BJ (cell line): ENCODE measurements at regions of chr15 and their contacts with region 1.

Region 1: DNA sequence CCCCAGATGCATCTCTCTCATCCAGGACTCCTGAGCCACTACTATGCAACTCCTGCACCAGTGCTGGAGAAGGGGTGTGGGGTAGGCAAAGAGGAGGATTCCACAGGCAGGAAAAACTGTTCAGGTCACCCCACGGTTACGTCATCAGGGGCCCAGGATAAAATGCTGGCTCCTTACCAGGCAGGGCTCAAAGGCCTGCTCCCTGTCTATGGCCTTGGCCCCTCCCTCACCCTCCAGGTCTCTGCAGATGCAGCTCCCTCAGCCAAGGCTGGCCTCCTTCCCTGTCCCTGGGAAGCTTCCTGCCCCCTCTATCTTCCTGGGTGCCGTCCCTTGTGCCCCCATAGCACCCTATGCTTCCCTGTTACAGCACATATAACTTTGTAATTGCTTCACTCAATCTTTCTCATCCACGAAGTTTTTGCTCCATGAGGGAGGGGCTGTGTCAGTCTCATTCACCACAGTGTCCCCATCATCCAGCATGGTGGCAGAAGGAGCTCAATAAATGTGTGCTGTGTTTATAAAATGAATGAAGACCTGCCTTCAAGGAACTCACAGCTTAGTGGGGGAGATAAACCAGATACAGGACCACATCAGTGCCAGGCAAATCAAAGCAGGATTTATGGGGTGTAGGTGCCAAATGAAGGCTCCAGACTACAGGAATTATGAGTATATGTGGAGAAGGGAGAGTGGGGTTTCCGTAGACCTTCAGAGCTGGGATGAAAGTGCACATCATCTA is 18.6 kb downstream of the KBTBD13 start:
- DNase-seq: no peak
- H3K4me3 ChIP-seq: no peak overlapping the region
- H3K27me3 ChIP-seq: no peaks in the 10 kb centered on the region
- CTCF ChIP-seq: no peak

Region 2: GRCh38 chr15:64877435-64877834 is 217.7 kb before region 1 on chr15:
- CTCF ChIA-PET with region 1: no interaction called
- POLR2A ChIA-PET with region 1: interaction called, 13 read pairs
- DNase-seq: no peak
- H3K4me3 ChIP-seq: no peak overlapping the region
- H3K27me3 ChIP-seq: no peaks in the 10 kb centered on the region
- CTCF ChIP-seq: no peak

Region 3: DNA sequence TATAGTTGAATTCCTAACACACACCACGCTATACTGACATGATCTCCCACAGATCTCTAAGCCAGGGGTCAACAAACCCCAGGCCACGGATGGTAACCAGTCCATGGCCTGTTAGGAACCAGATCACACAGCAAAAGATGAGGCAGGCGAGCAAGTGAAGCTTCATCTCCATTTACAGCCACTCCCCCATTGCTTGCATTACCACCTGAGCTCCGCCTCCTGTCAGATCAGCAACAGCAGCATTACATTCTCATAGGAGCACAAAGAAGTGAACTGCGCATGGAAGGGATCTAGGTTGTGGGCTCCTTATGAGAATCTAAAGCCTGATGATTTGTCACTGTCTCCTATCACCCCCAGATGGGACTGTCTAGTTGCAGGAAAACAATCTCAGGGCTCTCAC is 35.8 kb after region 1 on chr15:
- CTCF ChIA-PET with region 1: no interaction called
- POLR2A ChIA-PET with region 1: no interaction called
- DNase-seq: no peak
- H3K4me3 ChIP-seq: no peak overlapping the region
- H3K27me3 ChIP-seq: no peaks in the 10 kb centered on the region
- CTCF ChIP-seq: no peak